ENCODE measurements at regions of chr20 and their contacts with region 1.

Region 1: DNA sequence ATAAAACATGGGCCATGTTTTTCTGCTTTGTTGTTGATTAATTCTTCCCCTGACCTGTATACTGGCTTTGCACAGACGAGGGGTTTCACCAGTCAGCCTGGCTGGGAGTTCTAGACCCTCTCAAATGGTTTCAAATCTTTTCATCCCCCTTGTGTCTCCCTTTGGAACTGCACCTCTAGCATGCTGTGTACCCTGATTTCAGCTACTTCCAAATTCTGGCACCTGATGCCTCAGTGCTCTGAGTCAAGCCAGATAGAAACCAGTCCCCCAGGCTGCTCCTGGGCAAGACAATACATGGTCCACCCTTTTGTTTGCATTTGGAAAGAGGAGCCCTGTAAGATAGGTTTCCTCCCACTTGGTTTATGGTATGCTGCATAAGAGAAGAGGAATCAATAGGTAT is 290.2 kb downstream of the BTBD3 start:
- DNase-seq: peak in 1 of 2 donors; percentile 9
- ATAC-seq: peak in 1 of 8 donors; percentile 44
- H3K4me3 ChIP-seq: no peak overlapping the region
- H3K27ac ChIP-seq: no peak overlapping the region
- H3K4me1 ChIP-seq: no peaks in the 10 kb centered on the region
- H3K27me3 ChIP-seq: no peaks in the 10 kb centered on the region
- CTCF ChIP-seq: peak in 8 of 9 donors; percentile 25 to 65 (median 56)

Region 2: DNA sequence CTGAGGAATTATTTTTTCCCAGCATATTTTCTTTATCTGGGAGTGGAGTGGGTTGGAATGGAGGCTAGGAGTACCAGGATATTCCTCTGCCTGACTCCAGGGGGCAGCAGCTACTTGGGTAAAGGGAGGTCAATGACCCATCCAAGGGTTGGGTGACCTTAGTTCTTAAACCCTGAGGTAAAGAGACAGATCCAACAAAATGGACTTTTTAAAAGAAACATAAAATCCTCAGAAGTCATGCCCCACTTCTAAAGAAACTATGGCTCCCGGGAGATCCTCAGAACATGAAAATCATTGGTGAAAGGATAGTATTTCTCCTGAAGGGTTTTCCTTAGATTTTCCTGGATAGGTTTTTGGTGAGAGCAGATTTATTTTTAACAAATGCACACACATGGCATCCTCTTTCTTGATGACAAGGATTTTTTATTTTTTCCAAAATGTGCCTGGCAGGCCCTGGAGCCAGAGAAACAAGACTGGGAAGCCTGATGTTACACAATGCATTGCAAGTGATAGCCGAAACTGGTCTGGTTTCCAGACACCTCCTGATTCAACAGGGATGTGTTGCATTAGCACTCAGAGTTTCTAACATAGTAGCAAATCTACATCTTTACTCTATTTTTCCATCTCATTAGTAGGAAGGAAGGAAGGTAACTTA is 531.1 kb before region 1 on chr20:
- intact Hi-C with region 1: loop called in 6 of 10 experiments (anchors 2 to 10 kb)
- DNase-seq: peak; percentile 46 to 56
- ATAC-seq: peak in 7 of 8 donors; percentile 82 to 93 (median 87)
- H3K4me3 ChIP-seq: peak overlapping the region in 1 of 10 donors; percentile 23
- H3K27ac ChIP-seq: peak overlapping the region in 3 of 10 donors; percentile 11 to 41 (median 19)
- H3K4me1 ChIP-seq: peaks cover 0 to 19% (median 4%) of the 10 kb centered on the region in 9 donors
- H3K27me3 ChIP-seq: peaks cover 0 to 7% (median 0%) of the 10 kb centered on the region in 7 donors
- CTCF ChIP-seq: peak; percentile 62 to 92 (median 84)

Region 3: DNA sequence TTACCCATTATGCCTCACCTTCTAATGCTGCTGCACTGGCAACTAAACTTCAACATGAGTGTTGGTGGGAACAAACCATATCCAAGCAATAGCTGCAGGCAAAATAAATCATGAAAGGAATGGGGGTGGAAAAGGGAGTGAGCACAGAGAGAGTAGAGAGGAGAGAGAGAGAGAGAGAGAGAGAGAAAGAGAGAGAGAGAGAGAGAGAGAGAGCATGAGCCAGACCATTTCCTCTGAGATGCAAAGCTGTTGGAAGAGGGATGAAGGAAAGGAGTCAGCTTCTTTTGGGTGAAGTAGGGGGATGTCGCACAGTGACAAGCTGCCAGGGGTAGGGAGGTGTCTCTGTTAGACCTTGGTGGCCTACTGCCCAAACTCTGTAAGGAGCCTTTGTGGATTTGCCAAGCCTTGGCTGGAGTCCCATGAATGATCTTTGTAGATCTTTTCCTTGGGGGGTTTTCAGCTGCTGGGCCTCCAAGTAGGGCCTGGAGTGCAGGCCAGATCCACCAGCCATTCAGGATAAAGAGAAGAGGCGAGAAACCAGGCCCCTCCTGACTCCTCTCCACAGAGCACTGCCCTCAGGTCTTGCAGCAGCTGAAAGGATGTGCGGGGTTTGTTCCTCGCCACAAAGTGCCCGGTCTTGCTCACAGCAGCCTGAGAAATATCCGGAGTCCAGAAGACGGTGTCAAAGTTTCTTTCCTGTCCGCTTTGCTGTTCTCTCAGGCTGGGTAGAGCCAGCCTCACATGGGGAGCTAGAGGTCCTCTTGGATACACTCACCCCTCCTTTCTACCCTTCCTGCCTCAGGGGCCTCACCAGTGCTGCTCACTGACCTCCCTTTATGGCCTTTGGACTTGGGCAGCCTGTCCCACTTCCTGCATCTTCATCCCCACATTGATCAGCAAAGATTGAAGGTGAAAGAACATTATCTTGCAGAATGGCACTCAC is 272.4 kb before region 1 on chr20:
- intact Hi-C with region 1: loop called in 1 of 10 experiments (anchors 10 kb)
- DNase-seq: peak in 1 of 2 donors; percentile 15
- ATAC-seq: peak in 5 of 8 donors; percentile 25 to 49 (median 44)
- H3K4me3 ChIP-seq: no peak overlapping the region
- H3K27ac ChIP-seq: no peak overlapping the region
- H3K4me1 ChIP-seq: peaks cover 0 to 7% (median 0%) of the 10 kb centered on the region in 9 donors
- H3K27me3 ChIP-seq: no peaks in the 10 kb centered on the region
- CTCF ChIP-seq: no peak

Region 4: DNA sequence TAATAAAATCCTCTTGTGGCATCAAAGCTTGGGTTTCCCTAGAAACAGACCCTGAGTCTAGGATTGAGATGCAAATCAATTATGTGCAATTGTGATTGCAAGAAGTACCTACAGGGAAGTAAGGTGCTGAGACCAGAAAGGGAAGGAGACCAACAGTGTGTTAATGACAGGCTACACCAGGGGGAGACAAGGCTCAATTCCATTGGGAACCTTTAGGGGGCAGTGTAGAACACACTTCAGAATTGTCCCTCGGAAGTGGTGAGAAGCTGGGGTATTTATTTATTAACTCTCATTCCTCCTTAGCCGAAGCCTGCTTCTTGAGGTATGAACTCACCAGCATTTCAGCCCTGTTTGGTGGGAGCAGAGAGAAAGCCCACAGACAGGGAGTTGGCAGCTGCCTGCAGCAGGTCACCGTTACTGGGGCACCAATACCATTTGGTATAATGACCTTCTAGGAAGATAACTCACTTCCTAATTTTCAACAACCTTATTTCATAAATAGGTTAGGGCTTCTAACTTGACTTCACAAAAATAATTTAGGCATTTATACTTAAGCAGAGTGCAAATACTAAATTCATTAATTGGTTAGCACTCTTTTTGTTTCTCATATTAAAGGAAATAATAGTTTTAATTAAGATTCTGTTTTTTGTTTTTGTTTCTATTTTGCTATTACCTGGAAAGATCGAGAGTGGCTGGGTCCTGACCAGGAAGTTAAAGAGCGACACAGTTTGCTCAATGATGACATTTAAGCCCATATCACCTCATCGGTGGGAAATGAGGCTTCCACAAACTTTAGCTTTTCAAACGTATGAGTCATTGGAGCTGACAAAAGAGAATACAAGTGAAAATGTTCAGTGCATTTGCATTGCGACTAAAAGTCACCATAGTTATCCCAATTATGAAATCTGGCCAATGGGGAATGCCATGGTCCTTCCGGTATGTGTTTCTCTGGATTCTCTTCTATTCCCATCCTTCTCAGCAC is 195.3 kb before region 1 on chr20:
- intact Hi-C with region 1: loop called in 1 of 10 experiments (anchors 5 kb)
- DNase-seq: peak in 1 of 2 donors; percentile 18
- ATAC-seq: peak in 3 of 8 donors; percentile 37 to 51 (median 42)
- H3K4me3 ChIP-seq: no peak overlapping the region
- H3K27ac ChIP-seq: no peak overlapping the region
- H3K4me1 ChIP-seq: peaks cover 0 to 27% (median 4%) of the 10 kb centered on the region in 9 donors
- H3K27me3 ChIP-seq: no peaks in the 10 kb centered on the region
- CTCF ChIP-seq: peak; percentile 48 to 93 (median 74)

Region 5: GRCh38 chr20:12153628-12154027 is 54.2 kb before region 1 on chr20:
- intact Hi-C with region 1: no loop called
- DNase-seq: no peak
- ATAC-seq: no peak
- H3K4me3 ChIP-seq: no peak overlapping the region
- H3K27ac ChIP-seq: no peak overlapping the region
- H3K4me1 ChIP-seq: no peaks in the 10 kb centered on the region
- H3K27me3 ChIP-seq: no peaks in the 10 kb centered on the region
- CTCF ChIP-seq: no peak